GM10248 (cell line): ENCODE measurements at regions of chr1 and their contacts with region 1.

Region 1: DNA sequence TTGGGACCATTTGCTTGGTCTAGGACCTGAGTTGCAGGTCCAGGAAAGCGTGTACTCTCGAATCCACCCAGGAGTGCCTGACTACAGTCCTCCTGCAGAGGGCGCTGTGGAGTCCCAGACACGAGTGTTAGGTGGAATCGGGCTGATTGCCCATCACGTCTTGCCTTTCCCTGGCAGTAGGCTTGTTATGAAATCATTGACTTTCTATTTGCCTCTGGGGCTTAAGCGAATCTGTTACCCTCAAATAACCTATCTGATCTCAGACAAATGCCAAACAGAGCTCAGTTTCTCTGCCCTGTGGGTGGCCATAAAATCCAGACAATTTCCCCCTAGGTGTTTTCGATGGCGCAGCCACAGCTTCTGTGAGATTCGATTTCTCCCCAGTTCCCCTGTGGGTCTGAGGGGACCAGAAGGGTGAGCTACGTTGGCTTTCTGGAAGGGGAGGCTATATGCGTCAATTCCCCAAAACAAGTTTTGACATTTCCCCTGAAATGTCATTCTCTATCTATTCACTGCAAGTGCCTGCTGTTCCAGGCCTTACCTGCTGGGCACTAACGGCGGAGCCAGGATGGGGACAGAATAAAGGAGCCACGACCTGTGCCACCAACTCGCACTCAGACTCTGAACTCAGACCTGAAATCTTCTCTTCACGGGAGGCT is at the start of gene IL20:
- DNase-seq: peak; percentile 69
- CTCF ChIP-seq: peak; percentile 91

Region 2: DNA sequence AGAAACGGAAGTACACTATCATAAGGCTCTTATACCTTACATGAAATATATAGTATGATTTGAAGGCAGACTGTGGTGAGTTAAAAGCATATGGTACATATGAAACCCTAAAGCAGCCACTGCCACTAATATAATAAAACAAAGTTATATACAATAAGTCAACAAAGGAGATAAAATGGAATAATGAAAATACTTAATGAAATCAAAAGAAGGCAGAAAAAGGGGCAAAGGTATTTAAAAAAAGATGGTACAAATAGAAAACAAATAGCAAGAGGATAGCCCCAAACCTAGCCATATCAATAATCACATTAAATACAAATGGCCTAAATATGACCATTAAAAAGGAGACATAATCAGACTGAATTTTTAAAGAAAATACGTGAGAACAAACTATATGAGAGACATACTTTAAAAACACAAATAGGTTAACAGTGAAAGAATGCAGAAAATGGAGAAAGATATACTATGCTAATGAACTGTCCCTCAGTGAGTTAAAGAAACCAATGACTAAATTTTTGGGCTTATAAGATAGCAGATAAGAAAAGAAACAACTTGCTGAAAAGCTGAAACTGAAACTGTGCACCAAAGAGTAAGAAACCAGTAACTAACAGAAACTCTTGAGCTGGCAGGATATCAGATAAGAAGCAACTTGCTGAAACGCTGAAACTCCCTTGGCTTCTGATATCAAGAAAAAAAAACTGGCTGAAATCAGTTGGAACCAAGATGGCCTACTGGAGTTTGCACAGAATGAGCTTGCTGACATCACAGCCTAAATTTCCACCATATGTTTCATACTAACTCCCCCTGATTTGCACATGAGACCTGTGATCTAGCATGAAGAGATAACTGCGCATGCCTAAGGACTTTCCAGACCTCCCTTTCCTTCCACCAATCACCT is 48.5 kb before region 1 on chr1:
- CTCF ChIA-PET with region 1: no interaction called
- POLR2A ChIA-PET with region 1: no interaction called
- DNase-seq: no peak
- CTCF ChIP-seq: no peak

Region 3: GRCh38 chr1:206834711-206835110 is 30.4 kb before region 1 on chr1:
- CTCF ChIA-PET with region 1: interaction called, 31 read pairs
- POLR2A ChIA-PET with region 1: no interaction called
- DNase-seq: no peak
- CTCF ChIP-seq: no peak

Region 4: DNA sequence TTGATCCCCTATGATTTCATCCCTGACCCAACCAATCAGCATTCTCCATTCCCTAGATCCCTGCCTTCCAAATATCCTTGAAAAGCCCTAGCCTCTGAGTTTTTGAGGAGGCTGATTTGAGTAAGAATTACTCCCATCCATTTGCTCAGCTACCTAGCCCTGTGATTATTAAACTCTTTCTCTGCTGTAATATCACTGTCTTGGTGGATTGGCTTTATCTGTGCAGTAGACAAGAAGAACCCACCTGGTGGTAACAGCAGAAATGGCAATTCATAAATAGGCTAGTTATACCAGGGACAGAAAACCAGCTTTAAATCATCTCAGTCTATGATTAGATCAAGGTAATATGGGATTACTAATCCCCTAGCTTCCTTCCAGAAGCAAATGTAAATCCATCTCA is 13.3 kb after region 1 on chr1:
- CTCF ChIA-PET with region 1: interaction called, 21 read pairs
- POLR2A ChIA-PET with region 1: no interaction called
- DNase-seq: no peak
- CTCF ChIP-seq: no peak

Region 5: DNA sequence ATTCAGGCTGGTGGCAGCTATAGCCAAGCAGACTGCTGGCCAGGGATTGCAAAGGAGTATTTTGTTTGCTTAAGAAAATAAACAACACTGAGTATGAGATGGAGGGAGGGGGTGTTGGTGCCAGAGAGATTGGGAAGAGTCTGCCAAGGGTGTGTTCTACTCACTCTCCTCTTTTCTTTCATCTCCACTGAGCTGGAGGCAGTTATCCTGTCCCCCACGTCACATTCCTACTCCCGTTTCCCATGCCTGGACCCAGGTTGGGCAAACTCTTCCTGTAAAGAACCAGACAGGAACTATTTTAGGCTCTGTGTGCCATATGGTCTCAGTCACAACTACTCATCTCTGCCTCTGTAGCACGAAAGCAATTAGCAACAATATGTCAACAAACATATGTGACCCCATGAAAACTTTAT is 30.7 kb after region 1 on chr1:
- CTCF ChIA-PET with region 1: interaction called, 14 read pairs
- POLR2A ChIA-PET with region 1: no interaction called
- DNase-seq: no peak
- CTCF ChIP-seq: no peak

Region 6: GRCh38 chr1:206935491-206936067 is 70.4 kb after region 1 on chr1:
- CTCF ChIA-PET with region 1: interaction called, 22 read pairs
- POLR2A ChIA-PET with region 1: no interaction called
- DNase-seq: peak; percentile 64
- CTCF ChIP-seq: peak; percentile 49

Region 7: DNA sequence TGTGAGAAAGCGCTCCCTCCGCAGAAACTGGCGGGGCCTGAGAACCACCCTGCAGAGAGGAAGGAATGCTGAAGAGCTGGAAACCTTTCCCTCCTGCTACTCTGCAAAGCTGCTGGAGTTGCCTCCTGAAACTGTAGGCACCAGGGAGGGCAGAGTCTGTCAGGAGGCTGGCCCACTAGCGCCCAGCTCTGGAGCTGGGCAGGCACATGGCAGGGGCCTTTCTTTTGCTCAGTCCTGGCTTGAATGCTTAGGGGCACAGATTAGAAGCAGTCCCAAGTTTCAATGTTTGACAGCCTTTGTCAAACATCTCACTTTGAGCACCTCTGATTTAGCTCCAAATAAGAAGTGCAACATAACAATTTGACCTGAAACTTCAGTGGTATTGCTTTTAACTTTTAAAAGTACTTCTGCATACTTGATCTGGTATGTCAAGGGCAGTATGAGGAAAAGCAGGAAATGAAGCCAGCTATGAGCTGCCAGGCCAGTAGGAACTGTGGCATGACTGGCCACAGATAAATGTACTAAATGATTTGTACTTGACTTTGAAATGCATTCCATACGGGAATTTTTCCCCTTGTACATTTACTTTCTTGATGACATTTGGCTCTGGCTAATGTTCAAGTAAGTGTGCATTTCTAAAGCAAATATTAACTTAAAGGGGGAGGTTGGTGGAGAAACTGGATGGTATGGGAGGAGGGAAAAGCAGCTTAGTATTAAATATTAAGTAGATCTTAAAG is 160.2 kb after region 1 on chr1:
- CTCF ChIA-PET with region 1: no interaction called
- POLR2A ChIA-PET with region 1: no interaction called
- DNase-seq: no peak
- CTCF ChIP-seq: no peak